Naive thymus-derived CD4-positive, alpha-beta T cell (primary cell): ENCODE measurements at regions of chr18 and their contacts with region 1.

Region 1: DNA sequence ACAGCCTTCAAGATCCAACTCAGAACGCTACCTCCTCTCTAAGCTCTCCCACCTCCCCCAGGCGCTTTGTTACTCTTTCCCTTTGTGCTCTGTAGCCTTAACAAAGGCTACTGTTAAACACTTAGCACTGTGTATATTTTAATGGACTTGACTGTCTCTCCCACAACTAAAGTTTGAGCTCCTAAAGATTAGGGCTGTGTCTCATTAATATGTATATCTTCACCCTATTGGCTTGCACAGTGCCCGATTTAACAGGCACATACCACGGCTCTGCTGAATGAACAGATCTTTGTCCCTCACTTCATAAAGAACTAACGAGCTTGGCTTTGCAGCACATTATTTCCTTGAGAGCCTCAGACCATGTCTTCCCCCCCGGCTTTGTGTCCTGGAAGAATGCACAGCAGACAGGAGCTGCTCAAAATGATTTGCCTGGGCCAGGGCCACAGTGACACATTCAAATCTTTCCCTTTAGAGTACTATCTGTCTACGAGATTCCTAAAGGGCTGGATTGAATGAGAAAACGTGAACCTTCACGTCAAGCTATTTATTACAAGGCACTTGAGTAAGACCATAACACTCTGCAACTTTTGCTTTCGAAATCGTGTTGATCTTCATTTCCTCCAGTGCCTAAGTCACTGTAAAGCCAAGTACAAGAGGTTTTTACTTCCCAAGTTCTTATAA is 22.1 kb downstream of the ABHD3 start:
- DNase-seq: peak in 8 of 9 donors; percentile 24 to 63 (median 47)
- ATAC-seq: peak; percentile 84
- H3K4me3 ChIP-seq: peak overlapping the region; percentile 63
- H3K4me3 Mint-ChIP-seq: no peak overlapping the region
- H3K27ac ChIP-seq: peak overlapping the region; percentile 80
- H3K27ac Mint-ChIP-seq: no peak overlapping the region
- H3K4me1 ChIP-seq: peaks cover 7% of the 10 kb centered on the region in 2 donors
- H3K4me1 Mint-ChIP-seq: peaks cover 0 to 23% (median 10%) of the 10 kb centered on the region in 7 donors
- H3K27me3 ChIP-seq: no peaks in the 10 kb centered on the region
- H3K27me3 Mint-ChIP-seq: no peaks in the 10 kb centered on the region

Region 2: GRCh38 chr18:21600526-21601410 is 81.7 kb before region 1 on chr18 and contains the start of gene ESCO1:
- CTCF ChIA-PET with region 1: no interaction called
- POLR2A ChIA-PET with region 1: interaction called, 13 read pairs
- intact Hi-C with region 1: no loop called
- DNase-seq: peak; percentile 88 to 97 (median 95)
- ATAC-seq: peak; percentile 90
- H3K4me3 ChIP-seq: peak within 1 kb of the TSS; percentile 99
- H3K4me3 Mint-ChIP-seq: peak within 1 kb of the TSS; percentile 91 to 99 (median 96)
- H3K27ac ChIP-seq: peak within 1 kb of the TSS; percentile 84
- H3K27ac Mint-ChIP-seq: peak within 1 kb of the TSS; percentile 96 to 100 (median 99)
- H3K4me1 ChIP-seq: peaks cover 12 to 24% of the 10 kb centered on the region in 2 donors
- H3K4me1 Mint-ChIP-seq: peaks cover 16 to 57% (median 36%) of the 10 kb centered on the region in 7 donors
- H3K27me3 ChIP-seq: no peaks in the 10 kb centered on the region
- H3K27me3 Mint-ChIP-seq: no peaks in the 10 kb centered on the region
- total RNA-seq, gene ESCO1: 25.9 to 36.4 (median 35.1) TPM